Heart left ventricle (tissue), 16 donors: ENCODE measurements at regions of chr10 and their contacts with region 1.

Region 1: DNA sequence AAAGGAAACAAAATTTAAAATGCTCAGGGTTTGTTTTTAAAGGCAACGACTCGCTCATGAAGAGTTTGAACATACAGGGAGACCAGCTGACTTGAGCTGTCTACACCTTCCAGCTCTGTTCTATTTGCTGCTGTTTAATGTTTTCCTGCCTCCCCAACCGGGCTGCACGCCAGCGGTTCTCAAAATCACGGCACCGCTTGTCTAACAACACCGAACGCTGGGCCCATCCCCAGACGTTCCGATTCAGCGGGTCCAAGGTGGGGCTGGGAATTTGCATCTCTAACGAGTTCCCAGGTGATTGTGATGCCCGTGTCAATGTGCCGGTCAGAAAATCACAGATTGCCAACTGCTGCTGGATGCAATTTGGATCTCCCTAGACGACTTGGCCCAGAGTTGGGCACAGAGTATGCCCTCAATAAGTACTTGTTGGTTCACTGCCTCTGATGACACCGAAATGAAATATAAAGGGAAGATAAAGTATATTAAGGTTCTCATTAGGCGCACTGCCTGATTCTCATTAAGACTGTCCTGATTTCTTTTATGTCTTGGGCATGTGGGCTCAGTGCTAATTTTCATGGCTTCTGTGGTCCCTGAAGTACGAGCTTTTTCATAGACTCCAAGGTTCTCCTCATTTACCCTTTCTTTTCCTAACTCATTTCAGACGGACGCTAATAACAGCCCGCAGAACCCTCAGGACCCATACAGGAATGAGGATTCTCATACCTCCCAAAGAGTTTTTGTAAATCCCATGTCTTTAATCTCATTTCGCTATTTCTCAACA is 28.5 kb downstream of the CELF2 start:
- DNase-seq: peak; percentile 63 to 87 (median 81)
- ATAC-seq: peak; percentile 68 to 82 (median 78)
- H3K4me3 ChIP-seq: peak overlapping the region in 8 of 12 donors; percentile 8 to 41 (median 26)
- H3K27ac ChIP-seq: peak overlapping the region; percentile 55 to 87 (median 79)
- H3K4me1 ChIP-seq: peaks cover 0 to 92% (median 64%) of the 10 kb centered on the region in 12 donors
- H3K27me3 ChIP-seq: no peaks in the 10 kb centered on the region
- CTCF ChIP-seq: no peak
- POLR2A ChIP-seq: no peak

Region 2: GRCh38 chr10:10758306-10758705 is 287.9 kb before region 1 on chr10:
- intact Hi-C with region 1: no loop called
- DNase-seq: peak in 4 of 5 donors; percentile 27 to 59 (median 32)
- ATAC-seq: peak in 1 of 4 donors; percentile 56
- H3K4me3 ChIP-seq: no peak overlapping the region
- H3K27ac ChIP-seq: no peak overlapping the region
- H3K4me1 ChIP-seq: peaks cover 0 to 11% (median 0%) of the 10 kb centered on the region in 12 donors
- H3K27me3 ChIP-seq: no peaks in the 10 kb centered on the region
- CTCF ChIP-seq: no peak
- POLR2A ChIP-seq: no peak

Region 3: GRCh38 chr10:11080564-11080984 is 34.4 kb after region 1 on chr10:
- intact Hi-C with region 1: loop called in 1 of 10 experiments (anchors 5 kb)
- DNase-seq: no peak
- ATAC-seq: no peak
- H3K4me3 ChIP-seq: no peak overlapping the region
- H3K27ac ChIP-seq: peak overlapping the region in 5 of 12 donors; percentile 9 to 32 (median 12)
- H3K4me1 ChIP-seq: peaks cover 0 to 65% (median 36%) of the 10 kb centered on the region in 12 donors
- H3K27me3 ChIP-seq: no peaks in the 10 kb centered on the region
- CTCF ChIP-seq: no peak
- POLR2A ChIP-seq: no peak

Region 4: GRCh38 chr10:11145495-11145855 is 99.3 kb after region 1 on chr10:
- intact Hi-C with region 1: loop called in 1 of 10 experiments (anchors 5 kb)
- DNase-seq: peak in 4 of 5 donors; percentile 40 to 58 (median 57)
- ATAC-seq: peak; percentile 36 to 88 (median 74)
- H3K4me3 ChIP-seq: peak overlapping the region in 2 of 12 donors; percentile 8 to 38
- H3K27ac ChIP-seq: peak overlapping the region; percentile 3 to 82 (median 48)
- H3K4me1 ChIP-seq: peaks cover 4 to 81% (median 59%) of the 10 kb centered on the region in 12 donors
- H3K27me3 ChIP-seq: no peaks in the 10 kb centered on the region
- CTCF ChIP-seq: no peak
- POLR2A ChIP-seq: no peak

Region 5: DNA sequence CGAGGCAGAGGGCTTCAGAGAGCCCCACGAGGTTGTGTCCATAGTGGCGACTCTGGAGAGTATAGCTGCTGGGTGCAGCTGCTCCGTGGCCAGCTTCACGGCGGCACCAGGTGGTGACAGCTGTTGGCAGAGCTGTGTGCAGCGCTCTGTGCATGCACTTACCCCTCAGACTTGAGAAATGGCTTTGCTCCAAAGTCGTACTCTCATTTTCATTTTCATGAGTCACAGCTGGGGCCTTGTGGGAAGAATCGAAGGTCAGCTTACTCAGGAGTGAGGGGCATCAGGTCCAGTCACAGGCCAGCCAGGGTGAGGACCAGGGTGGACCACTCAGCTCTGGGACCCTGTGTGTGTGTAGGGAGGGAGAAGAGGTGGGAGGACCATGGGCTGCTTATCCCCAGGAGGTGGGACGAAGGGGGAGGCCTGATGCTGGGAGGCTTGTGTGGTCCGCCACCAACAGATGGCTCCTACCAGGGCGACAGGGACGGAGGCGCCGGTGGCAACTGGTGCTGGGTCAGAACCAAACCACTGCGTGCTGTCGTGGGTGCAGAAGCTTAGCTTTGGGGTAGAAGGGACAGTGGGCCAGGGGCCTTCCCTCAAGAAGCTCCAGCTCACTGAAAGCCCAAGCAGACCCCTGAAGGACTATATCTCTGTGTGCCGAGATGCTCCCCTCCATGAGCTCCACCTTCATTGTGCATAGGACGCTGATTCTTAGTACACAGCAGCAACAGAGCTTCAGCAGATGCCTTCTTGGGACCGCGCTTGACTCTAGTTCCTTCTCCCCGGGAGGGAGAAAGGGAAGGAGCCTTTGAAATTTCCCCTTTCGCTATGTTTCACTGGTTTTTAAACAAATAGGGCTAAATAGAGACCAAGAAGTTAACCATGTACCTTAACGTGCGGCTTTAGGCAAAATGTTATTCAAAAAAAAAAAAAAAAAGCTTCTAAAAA is 196.5 kb after region 1 on chr10:
- intact Hi-C with region 1: no loop called
- DNase-seq: peak; percentile 64 to 90 (median 79)
- ATAC-seq: peak; percentile 95 to 96 (median 96)
- H3K4me3 ChIP-seq: no peak overlapping the region
- H3K27ac ChIP-seq: peak overlapping the region; percentile 36 to 89 (median 80)
- H3K4me1 ChIP-seq: peaks cover 0 to 81% (median 42%) of the 10 kb centered on the region in 12 donors
- H3K27me3 ChIP-seq: no peaks in the 10 kb centered on the region
- CTCF ChIP-seq: peak in 2 of 12 donors; percentile 6 to 30
- POLR2A ChIP-seq: no peak